HepG2 (cell line): ENCODE measurements at regions of chr2 and their contacts with region 1.

Region 1: DNA sequence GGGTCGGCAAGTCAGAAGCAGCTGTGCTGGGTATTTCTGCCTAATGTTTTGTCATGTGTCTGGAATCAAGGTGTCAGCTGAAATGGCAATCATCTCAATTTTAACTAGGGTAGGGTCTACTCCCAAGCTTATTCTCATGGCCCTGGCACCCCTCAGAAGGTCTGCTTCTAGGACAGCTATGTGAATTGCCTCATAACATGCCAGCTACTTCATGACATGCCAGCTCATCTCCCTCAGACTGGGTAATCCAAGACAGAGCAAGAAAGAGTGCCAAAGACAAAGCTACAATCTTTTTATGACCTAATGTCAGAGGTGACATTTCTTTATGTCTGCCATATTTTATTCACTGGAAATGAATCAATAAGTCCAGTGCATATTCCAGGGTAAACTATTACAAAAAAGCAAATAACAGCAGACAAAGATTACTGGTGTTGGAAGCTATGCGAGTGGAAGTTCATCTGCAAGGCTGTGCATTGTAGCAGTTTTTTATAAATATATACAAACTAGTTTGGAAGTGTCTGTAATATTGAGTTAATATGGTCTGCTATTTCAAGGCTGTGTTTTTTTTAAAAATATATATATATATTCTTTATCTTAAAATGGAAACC is 153.3 kb downstream of the FSIP2 start:
- DNase-seq: no peak
- ATAC-seq: peak; percentile 77
- H3K4me3 ChIP-seq: 0 out of 6 replicates have a peak overlapping the region, but pooled peaks of 1 of the 3 experiments have one; percentile 6
- H3K27ac ChIP-seq: peak overlapping the region; percentile 52
- H3K4me1 ChIP-seq: peaks cover 41% of the 10 kb centered on the region
- H3K27me3 ChIP-seq: no peaks in the 10 kb centered on the region
- CTCF ChIP-seq: no peak
- EP300 ChIP-seq: peak in 1 of 2 experiments; percentile 37; a peak in 1 of 4 replicates
- POLR2A ChIP-seq: no peak
- RAD21 ChIP-seq: no peak

Region 2: GRCh38 chr2:185299867-185300266 is 592.0 kb before region 1 on chr2:
- CTCF ChIA-PET with region 1: no interaction called
- POLR2A ChIA-PET with region 1: no interaction called
- in situ Hi-C with region 1: no loop called
- intact Hi-C with region 1: no loop called
- DNase-seq: no peak
- ATAC-seq: no peak
- H3K4me3 ChIP-seq: no peak overlapping the region
- H3K27ac ChIP-seq: no peak overlapping the region
- H3K4me1 ChIP-seq: no peaks in the 10 kb centered on the region
- H3K27me3 ChIP-seq: no peaks in the 10 kb centered on the region
- CTCF ChIP-seq: no peak
- EP300 ChIP-seq: no peak
- POLR2A ChIP-seq: no peak
- RAD21 ChIP-seq: no peak

Region 3: GRCh38 chr2:185782223-185782769 is 109.6 kb before region 1 on chr2:
- CTCF ChIA-PET with region 1: no interaction called
- POLR2A ChIA-PET with region 1: no interaction called
- in situ Hi-C with region 1: no loop called
- intact Hi-C with region 1: loop called (anchors 5 kb)
- DNase-seq: peak; percentile 24
- ATAC-seq: peak; percentile 89
- H3K4me3 ChIP-seq: no peak overlapping the region
- H3K27ac ChIP-seq: no peak overlapping the region
- H3K4me1 ChIP-seq: peaks cover 10% of the 10 kb centered on the region
- H3K27me3 ChIP-seq: no peaks in the 10 kb centered on the region
- CTCF ChIP-seq: no peak
- EP300 ChIP-seq: no peak
- POLR2A ChIP-seq: no peak
- RAD21 ChIP-seq: no peak

Region 4: DNA sequence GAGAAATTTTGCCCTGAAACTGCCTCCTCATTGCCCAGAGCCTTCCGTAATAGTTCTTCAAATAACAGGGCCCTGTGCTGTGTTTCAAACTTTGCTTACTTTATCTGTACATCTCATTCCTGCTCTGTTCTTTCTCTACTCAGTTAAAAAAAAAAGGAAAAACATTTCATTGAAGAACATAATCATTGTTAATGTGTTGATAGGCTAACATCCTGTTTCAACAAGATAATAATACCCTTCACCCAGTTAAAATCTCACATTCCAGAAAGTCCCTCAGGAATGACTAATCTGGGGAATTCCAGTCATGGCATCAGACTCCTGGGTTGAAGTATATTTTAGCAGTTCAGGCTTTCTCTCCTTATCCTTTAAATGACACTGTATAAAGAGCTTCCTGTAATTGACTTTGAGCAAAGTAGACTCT is 652.4 kb after region 1 on chr2:
- CTCF ChIA-PET with region 1: no interaction called
- POLR2A ChIA-PET with region 1: no interaction called
- in situ Hi-C with region 1: no loop called
- intact Hi-C with region 1: no loop called
- DNase-seq: peak; percentile 93
- ATAC-seq: peak; percentile 91
- H3K4me3 ChIP-seq: no peak overlapping the region; a peak in 1 of 6 replicates
- H3K27ac ChIP-seq: peak overlapping the region; percentile 53
- H3K4me1 ChIP-seq: peaks cover 54% of the 10 kb centered on the region
- H3K27me3 ChIP-seq: no peaks in the 10 kb centered on the region
- CTCF ChIP-seq: no peak
- EP300 ChIP-seq: peak in 1 of 2 experiments; percentile 83; a peak in 3 of 4 replicates
- POLR2A ChIP-seq: no peak
- RAD21 ChIP-seq: no peak